Activated T-helper 2 cell treated with anti-CD3 and anti-CD28 coated beads, Interferon-gamma antibody, Interleukin-2, Interleukin-4, amounts not matched to agents 10 μg/mL and 5 μg/mL and 100 μg/mL, durations not matched to agents 14 hours and 24 hours and 36 hours (primary cell): ENCODE measurements at regions of chr14 and their contacts with region 1.

Region 1: DNA sequence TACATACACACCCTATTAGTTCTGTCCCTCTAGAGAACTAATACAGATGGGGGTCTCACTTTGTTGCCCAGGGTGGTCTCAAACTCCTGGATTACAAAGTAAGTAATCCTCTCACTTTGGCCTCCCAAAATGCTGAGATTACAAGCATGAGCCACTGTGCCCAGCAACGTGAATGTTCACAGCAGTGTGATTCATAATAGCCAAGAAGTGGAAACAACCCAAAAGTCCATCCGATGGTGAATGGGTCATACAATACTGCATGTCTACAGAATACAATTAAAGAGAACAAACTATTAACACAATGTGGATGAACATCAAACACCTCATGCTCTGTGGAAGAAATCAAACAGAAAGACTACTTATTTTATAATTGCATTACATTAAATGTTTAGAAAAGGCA is 57.3 kb upstream of the SYNE2 start:
- DNase-seq: no peak
- H3K4me3 Mint-ChIP-seq: no peak overlapping the region
- H3K27ac Mint-ChIP-seq: no peak overlapping the region
- H3K4me1 Mint-ChIP-seq: peaks cover 4% of the 10 kb centered on the region
- H3K27me3 Mint-ChIP-seq: peaks cover 19% of the 10 kb centered on the region

Region 2: DNA sequence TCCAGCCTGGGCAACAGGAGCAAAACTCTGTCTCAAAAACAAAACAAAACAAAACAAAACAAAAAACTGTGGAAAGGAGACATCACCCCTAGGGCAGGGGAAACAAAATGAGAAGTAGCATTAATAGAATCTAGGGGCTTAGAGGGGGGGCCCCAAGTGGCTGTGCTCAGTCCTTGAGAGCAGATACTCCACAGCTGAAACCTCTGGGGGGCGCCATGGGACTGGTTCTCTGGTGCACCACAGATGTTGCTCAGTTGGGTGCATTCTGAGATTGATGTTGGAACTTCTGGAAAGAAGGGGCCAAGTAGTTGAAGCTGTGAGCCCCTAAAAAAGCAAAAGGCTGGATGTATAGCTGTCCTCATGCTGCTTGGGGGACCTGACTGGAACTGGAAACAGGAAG is 45.4 kb after region 1 on chr14:
- intact Hi-C with region 1: no loop called
- DNase-seq: peak; percentile 18
- H3K4me3 Mint-ChIP-seq: no peak overlapping the region
- H3K27ac Mint-ChIP-seq: no peak overlapping the region
- H3K4me1 Mint-ChIP-seq: peaks cover 3% of the 10 kb centered on the region
- H3K27me3 Mint-ChIP-seq: peaks cover 14% of the 10 kb centered on the region

Region 3: GRCh38 chr14:63993992-63994391 is 198.5 kb after region 1 on chr14:
- intact Hi-C with region 1: loop called (anchors 5 kb)
- DNase-seq: no peak
- H3K4me3 Mint-ChIP-seq: no peak overlapping the region
- H3K27ac Mint-ChIP-seq: no peak overlapping the region
- H3K4me1 Mint-ChIP-seq: peaks cover 8% of the 10 kb centered on the region
- H3K27me3 Mint-ChIP-seq: no peaks in the 10 kb centered on the region